Naive thymus-derived CD4-positive, alpha-beta T cell (primary cell): ENCODE measurements at regions of chr12 and their contacts with region 1.

Region 1: DNA sequence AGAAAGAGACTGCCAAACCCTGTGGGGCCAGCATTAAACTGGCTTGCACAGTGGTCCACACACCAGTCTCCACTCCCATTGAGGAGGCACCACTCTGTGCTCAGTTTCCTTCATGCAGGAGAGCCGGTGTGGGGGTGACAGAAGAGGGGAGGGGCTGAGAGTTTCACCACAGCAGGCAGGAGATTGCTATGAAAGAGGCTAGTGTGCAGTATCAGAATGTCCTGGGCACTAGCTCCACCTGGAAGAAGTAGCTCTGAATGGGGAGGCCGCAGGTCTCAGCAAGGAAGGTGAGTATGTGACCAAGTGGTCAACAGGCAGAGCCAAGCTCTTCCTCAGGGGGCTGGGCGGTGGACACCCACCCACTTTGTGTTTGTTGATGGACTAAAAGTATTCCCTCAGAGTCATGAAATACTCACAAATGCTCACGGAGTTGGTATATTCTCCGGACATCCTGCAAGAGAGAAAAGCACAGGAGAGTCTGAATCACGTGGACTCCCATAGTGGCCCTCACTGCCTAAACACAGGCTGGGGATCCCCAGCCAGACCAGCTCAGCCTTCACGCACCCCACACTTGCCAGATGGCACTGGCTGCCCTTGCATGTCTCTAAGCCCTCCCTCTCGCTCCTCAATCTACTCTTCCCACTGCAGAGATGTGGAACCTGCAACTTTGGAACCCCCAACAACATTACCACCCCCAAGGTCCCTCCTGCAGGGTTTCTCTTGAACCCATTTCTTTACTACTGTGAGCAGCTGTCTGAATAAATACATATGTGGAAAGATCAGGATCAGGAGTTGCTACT is 7.8 kb upstream of the KRT72 start:
- DNase-seq: peak in 1 of 9 donors; percentile 14
- ATAC-seq: no peak
- H3K4me3 ChIP-seq: peak overlapping the region; percentile 4
- H3K4me3 Mint-ChIP-seq: peak overlapping the region in 9 of 10 donors; percentile 42 to 87 (median 66)
- H3K27ac ChIP-seq: peak overlapping the region; percentile 79
- H3K27ac Mint-ChIP-seq: peak overlapping the region; percentile 59 to 99 (median 97)
- H3K4me1 ChIP-seq: peaks cover 6 to 96% of the 10 kb centered on the region in 2 donors
- H3K4me1 Mint-ChIP-seq: peaks cover 68 to 100% (median 98%) of the 10 kb centered on the region in 7 donors
- H3K27me3 ChIP-seq: no peaks in the 10 kb centered on the region
- H3K27me3 Mint-ChIP-seq: peaks cover 0 to 4% (median 0%) of the 10 kb centered on the region in 5 donors

Region 2: DNA sequence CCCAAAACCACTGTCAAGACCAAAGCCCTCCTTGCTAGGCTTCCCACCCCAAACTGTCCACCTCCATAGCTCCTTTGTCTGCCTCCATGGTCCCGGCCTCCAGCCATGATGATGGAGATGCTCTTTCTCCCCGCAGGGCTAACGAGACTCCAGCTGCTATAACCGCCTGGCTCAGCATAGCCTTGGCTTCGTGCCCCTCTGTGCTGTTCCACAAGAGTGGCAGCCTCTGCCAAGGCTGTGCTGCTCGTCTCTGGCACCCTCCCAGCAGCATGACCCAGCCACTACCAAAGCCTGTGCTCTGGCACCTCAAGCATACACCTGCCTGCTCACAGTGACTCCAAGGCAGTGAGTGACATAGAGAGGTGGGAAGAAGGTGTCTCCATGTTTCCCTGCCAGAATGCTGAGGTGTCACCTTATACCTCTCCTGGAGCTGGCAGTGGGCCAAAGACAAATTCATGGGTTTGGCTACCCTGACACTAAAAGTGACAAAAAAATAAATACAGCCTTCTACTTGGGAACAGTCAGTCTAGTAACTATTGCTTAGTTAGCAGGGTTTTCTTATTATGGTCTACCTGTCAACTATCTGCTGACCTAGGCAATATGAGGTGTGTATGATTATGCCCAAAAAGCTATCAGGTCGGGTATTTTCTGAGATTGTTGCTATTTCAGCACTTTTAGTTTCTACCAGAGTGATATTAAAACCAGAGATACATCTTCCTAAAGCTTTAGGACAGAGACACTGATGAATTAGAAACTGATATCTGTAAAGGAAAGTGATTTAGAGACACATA is 25.4 kb after region 1 on chr12:
- CTCF ChIA-PET with region 1: interaction called, 15 read pairs
- POLR2A ChIA-PET with region 1: interaction called, 227 read pairs
- intact Hi-C with region 1: loop called in 1 of 2 experiments (anchors 2 kb)
- DNase-seq: peak in 1 of 9 donors; percentile 16
- ATAC-seq: no peak
- H3K4me3 ChIP-seq: no peak overlapping the region
- H3K4me3 Mint-ChIP-seq: peak overlapping the region in 9 of 10 donors; percentile 36 to 95 (median 60)
- H3K27ac ChIP-seq: no peak overlapping the region
- H3K27ac Mint-ChIP-seq: peak overlapping the region; percentile 50 to 96 (median 90)
- H3K4me1 ChIP-seq: peaks cover 19 to 59% of the 10 kb centered on the region in 2 donors
- H3K4me1 Mint-ChIP-seq: peaks cover 44 to 88% (median 67%) of the 10 kb centered on the region in 7 donors
- H3K27me3 ChIP-seq: peaks cover 0 to 3% of the 10 kb centered on the region in 2 donors
- H3K27me3 Mint-ChIP-seq: peaks cover 0 to 16% (median 0%) of the 10 kb centered on the region in 5 donors

Region 3: GRCh38 chr12:52645120-52645761 is 36.2 kb after region 1 on chr12:
- CTCF ChIA-PET with region 1: interaction called, 28 read pairs
- POLR2A ChIA-PET with region 1: interaction called, 223 read pairs
- intact Hi-C with region 1: loop called (anchors 1 kb)
- DNase-seq: peak in 7 of 9 donors; percentile 81 to 98 (median 94)
- ATAC-seq: peak; percentile 96
- H3K4me3 ChIP-seq: no peak overlapping the region
- H3K4me3 Mint-ChIP-seq: peak overlapping the region; percentile 72 to 88 (median 83)
- H3K27ac ChIP-seq: peak overlapping the region; percentile 92
- H3K27ac Mint-ChIP-seq: peak overlapping the region; percentile 97 to 100 (median 100)
- H3K4me1 ChIP-seq: peaks cover 28 to 81% of the 10 kb centered on the region in 2 donors
- H3K4me1 Mint-ChIP-seq: peaks cover 68 to 99% (median 94%) of the 10 kb centered on the region in 7 donors
- H3K27me3 ChIP-seq: no peaks in the 10 kb centered on the region
- H3K27me3 Mint-ChIP-seq: peaks cover 0 to 17% (median 0%) of the 10 kb centered on the region in 5 donors

Region 4: DNA sequence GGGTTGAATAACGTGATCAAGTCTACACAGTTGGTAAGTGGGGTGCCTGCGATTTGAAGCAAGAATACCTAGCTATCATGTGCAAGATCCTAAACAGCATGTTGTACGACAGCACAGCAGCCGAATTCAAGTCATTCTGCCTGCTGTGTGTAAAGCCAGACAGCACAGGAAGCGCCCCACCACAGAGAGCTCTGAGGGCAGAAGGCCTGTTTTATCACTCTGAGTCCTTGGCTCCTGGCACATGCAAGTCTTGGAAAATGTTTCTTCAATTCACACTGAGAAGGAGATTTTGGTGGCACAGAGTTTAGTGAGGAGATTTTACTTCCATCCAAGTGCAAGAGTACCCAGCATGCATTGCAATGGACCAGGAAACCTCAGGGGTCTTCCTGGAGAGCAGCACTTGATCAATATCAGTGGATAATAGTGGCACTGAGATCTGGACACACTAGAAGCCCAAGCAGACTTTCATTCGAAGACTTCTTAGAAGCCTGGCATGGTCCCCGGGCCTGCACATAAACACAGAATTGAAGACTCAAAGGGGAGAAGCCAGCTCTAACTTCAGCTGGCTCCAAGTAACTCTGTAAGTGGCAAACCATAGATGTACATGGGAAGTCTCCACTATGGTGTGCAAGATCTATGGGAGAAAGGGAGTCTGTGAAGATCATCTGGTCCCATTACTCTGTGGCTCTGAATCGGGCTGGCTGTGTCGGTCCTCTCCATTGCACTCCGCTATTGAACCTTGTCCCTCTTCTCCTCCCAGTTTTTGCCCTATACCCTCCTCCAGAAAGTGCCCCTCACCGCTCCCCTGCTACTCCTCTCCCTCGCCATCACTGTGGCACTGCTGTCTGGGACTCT is 72.7 kb after region 1 on chr12:
- CTCF ChIA-PET with region 1: interaction called, 3 read pairs
- POLR2A ChIA-PET with region 1: interaction called, 11 read pairs
- intact Hi-C with region 1: loop called in 1 of 2 experiments (anchors 2 kb)
- DNase-seq: peak in 7 of 9 donors; percentile 60 to 74 (median 67)
- ATAC-seq: peak; percentile 90
- H3K4me3 ChIP-seq: no peak overlapping the region
- H3K4me3 Mint-ChIP-seq: peak overlapping the region in 9 of 10 donors; percentile 2 to 76 (median 48)
- H3K27ac ChIP-seq: peak overlapping the region; percentile 42
- H3K27ac Mint-ChIP-seq: peak overlapping the region in 8 of 9 donors; percentile 78 to 93 (median 86)
- H3K4me1 ChIP-seq: peaks cover 6 to 24% of the 10 kb centered on the region in 2 donors
- H3K4me1 Mint-ChIP-seq: peaks cover 16 to 76% (median 66%) of the 10 kb centered on the region in 7 donors
- H3K27me3 ChIP-seq: peaks cover 0 to 4% of the 10 kb centered on the region in 2 donors
- H3K27me3 Mint-ChIP-seq: peaks cover 0 to 35% (median 0%) of the 10 kb centered on the region in 5 donors

Region 5: GRCh38 chr12:52691076-52691840 is 82.2 kb after region 1 on chr12:
- CTCF ChIA-PET with region 1: interaction called, 12 read pairs
- POLR2A ChIA-PET with region 1: interaction called, 12 read pairs
- intact Hi-C with region 1: loop called in 1 of 2 experiments (anchors 1 kb)
- DNase-seq: peak; percentile 46 to 74 (median 71)
- ATAC-seq: peak; percentile 91
- H3K4me3 ChIP-seq: peak overlapping the region; percentile 50
- H3K4me3 Mint-ChIP-seq: peak overlapping the region; percentile 85 to 97 (median 91)
- H3K27ac ChIP-seq: peak overlapping the region; percentile 68
- H3K27ac Mint-ChIP-seq: peak overlapping the region in 8 of 9 donors; percentile 90 to 98 (median 97)
- H3K4me1 ChIP-seq: peaks cover 5 to 27% of the 10 kb centered on the region in 2 donors
- H3K4me1 Mint-ChIP-seq: peaks cover 8 to 63% (median 55%) of the 10 kb centered on the region in 7 donors
- H3K27me3 ChIP-seq: no peaks in the 10 kb centered on the region
- H3K27me3 Mint-ChIP-seq: peaks cover 0 to 79% (median 0%) of the 10 kb centered on the region in 5 donors

Region 6: DNA sequence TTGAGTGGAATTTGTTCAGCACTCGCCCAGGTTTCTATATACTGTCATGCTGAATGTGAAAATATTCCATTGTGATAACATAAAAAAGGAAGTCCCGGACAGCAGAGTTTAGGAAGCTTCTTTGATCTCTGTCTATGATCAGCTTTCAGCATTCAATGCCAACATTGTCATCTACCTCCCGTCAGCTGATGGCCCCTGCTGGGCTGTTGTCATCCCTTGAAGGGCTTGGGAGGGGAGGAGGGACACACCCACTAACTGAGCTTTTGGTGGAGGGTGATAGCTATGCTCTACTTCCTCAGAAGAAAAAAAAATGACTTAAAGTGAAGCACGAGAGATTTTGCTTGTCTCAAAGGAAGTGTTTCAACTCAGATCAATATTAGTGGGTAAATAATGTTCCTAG is 99.0 kb after region 1 on chr12:
- CTCF ChIA-PET with region 1: interaction called, 11 read pairs
- POLR2A ChIA-PET with region 1: interaction called, 3 read pairs
- intact Hi-C with region 1: loop called in 1 of 2 experiments (anchors 1 kb)
- DNase-seq: peak in 7 of 9 donors; percentile 26 to 66 (median 52)
- ATAC-seq: peak; percentile 49
- H3K4me3 ChIP-seq: no peak overlapping the region
- H3K4me3 Mint-ChIP-seq: peak overlapping the region in 5 of 10 donors; percentile 11 to 63 (median 50)
- H3K27ac ChIP-seq: no peak overlapping the region
- H3K27ac Mint-ChIP-seq: peak overlapping the region in 8 of 9 donors; percentile 75 to 91 (median 83)
- H3K4me1 ChIP-seq: peaks cover 0 to 23% of the 10 kb centered on the region in 2 donors
- H3K4me1 Mint-ChIP-seq: peaks cover 4 to 62% (median 40%) of the 10 kb centered on the region in 7 donors
- H3K27me3 ChIP-seq: no peaks in the 10 kb centered on the region
- H3K27me3 Mint-ChIP-seq: peaks cover 0 to 29% (median 0%) of the 10 kb centered on the region in 5 donors